ENCODE measurements at regions of chr10 and their contacts with region 1.

Region 1: GRCh38 chr10:27003432-27003831 is 96.9 kb downstream of the ANKRD26 start:
- DNase-seq: no peak
- H3K4me3 ChIP-seq: no peak overlapping the region
- H3K27ac ChIP-seq: no peak overlapping the region
- H3K4me1 ChIP-seq: no peaks in the 10 kb centered on the region
- H3K27me3 ChIP-seq: no peaks in the 10 kb centered on the region
- CTCF ChIP-seq: no peak

Region 2: DNA sequence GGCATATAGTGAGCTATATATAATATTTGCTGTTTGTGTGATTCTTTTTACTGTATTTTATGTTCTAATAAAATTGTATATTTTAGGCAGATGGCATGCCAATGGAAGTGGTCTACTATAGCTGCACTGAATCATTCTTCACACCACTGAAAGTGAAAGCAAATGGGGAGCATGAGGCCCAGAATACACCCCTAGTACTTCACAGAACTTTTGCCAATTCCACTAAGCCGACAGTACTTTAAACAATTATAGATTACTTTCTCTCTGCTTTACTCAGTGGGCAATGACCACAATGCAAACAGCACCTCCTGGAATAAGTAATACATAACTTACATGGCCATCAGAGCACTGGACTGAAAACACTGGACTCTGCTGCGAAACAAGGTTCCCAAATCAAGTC is 26.6 kb after region 1 on chr10:
- CTCF ChIA-PET with region 1: no interaction called
- POLR2A ChIA-PET with region 1: no interaction called
- intact Hi-C with region 1: no loop called
- DNase-seq: no peak
- H3K4me3 ChIP-seq: no peak overlapping the region
- H3K27ac ChIP-seq: no peak overlapping the region
- H3K4me1 ChIP-seq: no peaks in the 10 kb centered on the region
- H3K27me3 ChIP-seq: no peaks in the 10 kb centered on the region
- CTCF ChIP-seq: no peak

Region 3: GRCh38 chr10:27088119-27089044 is 85.0 kb after region 1 on chr10:
- CTCF ChIA-PET with region 1: no interaction called
- POLR2A ChIA-PET with region 1: interaction called, 11 read pairs
- intact Hi-C with region 1: no loop called
- DNase-seq: no peak
- H3K4me3 ChIP-seq: no peak overlapping the region
- H3K27ac ChIP-seq: no peak overlapping the region
- H3K4me1 ChIP-seq: no peaks in the 10 kb centered on the region
- H3K27me3 ChIP-seq: no peaks in the 10 kb centered on the region
- CTCF ChIP-seq: no peak